Caco-2 (cell line): ENCODE measurements at regions of chr18 and their contacts with region 1.

Region 1: DNA sequence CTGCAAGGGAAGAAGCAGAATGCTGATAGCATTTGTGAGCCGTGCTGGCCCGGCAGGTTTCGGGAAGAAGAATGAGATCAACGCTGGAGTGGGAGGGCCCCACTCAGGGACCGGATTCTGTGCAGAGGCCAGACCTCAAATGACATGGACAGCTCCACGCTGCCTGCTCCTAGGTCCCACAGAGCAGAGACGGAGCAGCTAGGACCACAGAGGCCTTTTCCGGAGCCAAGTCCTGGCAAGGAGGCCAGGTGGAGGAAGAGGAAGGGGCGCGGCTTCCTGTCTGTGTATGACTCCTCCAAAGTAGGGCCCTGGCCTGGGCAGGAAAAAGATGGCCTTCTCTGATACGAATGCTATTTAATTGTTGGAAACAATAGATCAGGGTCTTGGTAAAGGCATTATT is 139.9 kb downstream of the LRRC30 start:
- DNase-seq: peak in 1 of 2 experiments; percentile 62
- H3K4me3 ChIP-seq: 0 out of 2 replicates have a peak overlapping the region, but pooled peaks have one; percentile 13
- H3K4me3 Mint-ChIP-seq: peak overlapping the region; percentile 66
- H3K27ac Mint-ChIP-seq: peak overlapping the region; percentile 10
- H3K4me1 ChIP-seq: peaks cover 17% of the 10 kb centered on the region
- H3K4me1 Mint-ChIP-seq: peaks cover 31% of the 10 kb centered on the region
- H3K27me3 ChIP-seq: no peaks in the 10 kb centered on the region
- H3K27me3 Mint-ChIP-seq: no peaks in the 10 kb centered on the region
- CTCF ChIP-seq: no peak

Region 2: GRCh38 chr18:7291046-7291445 is 79.8 kb before region 1 on chr18:
- CTCF ChIA-PET with region 1: no interaction called
- POLR2A ChIA-PET with region 1: no interaction called
- intact Hi-C with region 1: no loop called
- DNase-seq: no peak
- H3K4me3 ChIP-seq: no peak overlapping the region
- H3K4me3 Mint-ChIP-seq: no peak overlapping the region
- H3K27ac Mint-ChIP-seq: no peak overlapping the region
- H3K4me1 ChIP-seq: no peaks in the 10 kb centered on the region
- H3K4me1 Mint-ChIP-seq: no peaks in the 10 kb centered on the region
- H3K27me3 ChIP-seq: no peaks in the 10 kb centered on the region; the same call in 1 of the 2 replicates
- H3K27me3 Mint-ChIP-seq: peaks cover 7% of the 10 kb centered on the region
- CTCF ChIP-seq: no peak

Region 3: GRCh38 chr18:7429831-7430230 is 59.0 kb after region 1 on chr18:
- CTCF ChIA-PET with region 1: no interaction called
- POLR2A ChIA-PET with region 1: no interaction called
- intact Hi-C with region 1: loop called (anchors 10 kb)
- DNase-seq: no peak
- H3K4me3 ChIP-seq: no peak overlapping the region
- H3K4me3 Mint-ChIP-seq: no peak overlapping the region
- H3K27ac Mint-ChIP-seq: no peak overlapping the region
- H3K4me1 ChIP-seq: no peaks in the 10 kb centered on the region
- H3K4me1 Mint-ChIP-seq: no peaks in the 10 kb centered on the region
- H3K27me3 ChIP-seq: no peaks in the 10 kb centered on the region
- H3K27me3 Mint-ChIP-seq: peaks cover 9% of the 10 kb centered on the region
- CTCF ChIP-seq: no peak

Region 4: GRCh38 chr18:7452331-7452730 is 81.5 kb after region 1 on chr18:
- CTCF ChIA-PET with region 1: interaction called, 6 read pairs
- POLR2A ChIA-PET with region 1: no interaction called
- intact Hi-C with region 1: loop called (anchors 5 kb)
- DNase-seq: peak in 1 of 2 experiments; percentile 60
- H3K4me3 ChIP-seq: no peak overlapping the region
- H3K4me3 Mint-ChIP-seq: no peak overlapping the region
- H3K27ac Mint-ChIP-seq: no peak overlapping the region
- H3K4me1 ChIP-seq: peaks cover 6% of the 10 kb centered on the region; the same call in 1 of the 2 replicates
- H3K4me1 Mint-ChIP-seq: peaks cover 5% of the 10 kb centered on the region
- H3K27me3 ChIP-seq: no peaks in the 10 kb centered on the region
- H3K27me3 Mint-ChIP-seq: peaks cover 7% of the 10 kb centered on the region
- CTCF ChIP-seq: peak; percentile 66 to 81